ENCODE measurements at regions of chr20 and their contacts with region 1.

Region 1: DNA sequence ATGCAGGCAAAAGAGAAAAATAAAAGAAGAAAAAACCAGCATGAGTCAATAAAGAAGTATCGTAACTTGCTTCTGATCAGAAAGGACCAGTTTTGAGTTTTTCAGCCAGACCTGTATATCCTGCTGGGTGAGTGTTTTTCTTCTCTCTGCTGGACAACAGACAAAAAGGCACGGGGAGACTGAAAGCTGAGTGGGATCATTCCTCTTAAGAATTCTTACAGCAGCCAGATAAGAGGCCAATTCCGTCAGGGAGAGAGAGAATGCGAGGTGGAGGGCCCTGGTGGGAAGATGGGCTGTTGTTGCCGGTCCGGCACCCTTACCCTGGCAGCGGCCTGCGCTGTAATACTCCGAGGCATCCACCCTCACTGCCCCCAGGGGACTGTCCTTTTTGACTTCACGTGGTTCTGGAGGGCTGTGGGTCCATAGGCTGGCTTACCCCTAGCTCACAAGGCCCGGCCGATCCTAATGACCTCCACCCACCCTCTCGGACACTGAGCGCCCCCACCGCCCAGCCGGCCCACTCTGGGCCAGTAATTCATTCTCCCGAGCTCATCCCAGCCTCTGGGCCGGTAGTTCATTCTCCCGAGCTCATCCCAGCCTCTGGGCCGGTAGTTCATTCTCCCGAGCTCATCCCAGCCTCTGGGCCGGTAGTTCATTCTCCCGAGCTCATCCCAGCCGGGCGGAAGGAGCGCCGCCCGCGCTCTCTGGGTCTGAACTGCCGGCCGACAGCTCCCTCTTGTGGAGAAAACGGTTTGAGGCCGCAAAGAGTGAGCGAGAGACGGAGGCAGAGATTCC is 118.3 kb upstream of the SIRPA start:
- DNase-seq: peak; percentile 83
- H3K4me3 ChIP-seq: peak overlapping the region; percentile 83
- H3K27ac ChIP-seq: peak overlapping the region; percentile 68
- H3K27me3 ChIP-seq: peaks cover 4% of the 10 kb centered on the region
- CTCF ChIP-seq: peak; percentile 83

Region 2: DNA sequence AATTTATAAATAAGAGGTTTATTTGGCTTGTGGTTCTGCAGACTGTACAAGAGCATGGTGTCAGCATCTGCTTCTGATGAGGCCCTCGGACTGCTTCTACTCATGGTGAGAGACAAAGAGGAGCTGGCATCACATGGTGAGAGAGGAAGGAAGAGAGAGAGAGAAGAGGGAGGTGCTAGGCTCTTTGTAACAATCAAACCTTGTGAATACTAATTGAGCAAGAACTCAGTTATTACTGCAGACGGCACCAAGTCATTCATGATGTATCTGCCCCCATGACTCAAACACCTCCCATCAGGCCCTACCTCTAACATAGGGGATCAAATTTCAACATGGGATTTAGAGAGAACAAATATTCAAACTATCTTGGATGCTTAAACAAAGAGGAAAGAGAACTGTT is 113.0 kb before region 1 on chr20:
- CTCF ChIA-PET with region 1: no interaction called
- POLR2A ChIA-PET with region 1: no interaction called
- DNase-seq: no peak
- H3K4me3 ChIP-seq: no peak overlapping the region
- H3K27ac ChIP-seq: no peak overlapping the region
- H3K27me3 ChIP-seq: peaks cover 3% of the 10 kb centered on the region
- CTCF ChIP-seq: no peak

Region 3: DNA sequence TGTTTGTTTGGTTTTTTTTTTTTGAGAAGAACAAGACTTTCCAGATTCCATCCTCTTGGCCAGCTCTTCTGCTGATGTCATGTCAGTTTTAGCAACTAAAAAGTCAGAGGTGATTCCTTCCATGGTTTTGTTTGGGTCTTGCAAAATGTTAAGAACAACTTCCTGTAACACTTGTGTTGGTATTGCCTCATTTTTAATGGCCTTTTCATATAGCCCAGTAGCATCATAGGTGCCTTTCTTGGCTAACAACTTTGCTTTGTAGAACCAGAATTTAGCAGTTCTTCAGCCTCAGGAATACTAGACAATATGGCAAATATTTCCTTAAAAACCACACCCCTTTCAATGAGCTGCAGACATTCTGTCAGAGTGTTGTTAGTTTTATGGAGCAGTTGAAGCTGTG is 19.8 kb before region 1 on chr20:
- CTCF ChIA-PET with region 1: interaction called, 126 read pairs
- POLR2A ChIA-PET with region 1: no interaction called
- DNase-seq: no peak
- H3K4me3 ChIP-seq: no peak overlapping the region
- H3K27ac ChIP-seq: no peak overlapping the region
- H3K27me3 ChIP-seq: peaks cover 2% of the 10 kb centered on the region
- CTCF ChIP-seq: no peak

Region 4: GRCh38 chr20:1790386-1790785 is 13.5 kb after region 1 on chr20:
- CTCF ChIA-PET with region 1: interaction called, 46 read pairs
- POLR2A ChIA-PET with region 1: no interaction called
- DNase-seq: no peak
- H3K4me3 ChIP-seq: no peak overlapping the region
- H3K27ac ChIP-seq: no peak overlapping the region
- H3K27me3 ChIP-seq: peaks cover 43% of the 10 kb centered on the region
- CTCF ChIP-seq: no peak

Region 5: GRCh38 chr20:1810926-1811620 is 34.2 kb after region 1 on chr20:
- CTCF ChIA-PET with region 1: interaction called, 116 read pairs
- POLR2A ChIA-PET with region 1: interaction called, 4 read pairs
- DNase-seq: no peak
- H3K4me3 ChIP-seq: no peak overlapping the region
- H3K27ac ChIP-seq: peak overlapping the region; percentile 80
- H3K27me3 ChIP-seq: no peaks in the 10 kb centered on the region
- CTCF ChIP-seq: no peak

Region 6: DNA sequence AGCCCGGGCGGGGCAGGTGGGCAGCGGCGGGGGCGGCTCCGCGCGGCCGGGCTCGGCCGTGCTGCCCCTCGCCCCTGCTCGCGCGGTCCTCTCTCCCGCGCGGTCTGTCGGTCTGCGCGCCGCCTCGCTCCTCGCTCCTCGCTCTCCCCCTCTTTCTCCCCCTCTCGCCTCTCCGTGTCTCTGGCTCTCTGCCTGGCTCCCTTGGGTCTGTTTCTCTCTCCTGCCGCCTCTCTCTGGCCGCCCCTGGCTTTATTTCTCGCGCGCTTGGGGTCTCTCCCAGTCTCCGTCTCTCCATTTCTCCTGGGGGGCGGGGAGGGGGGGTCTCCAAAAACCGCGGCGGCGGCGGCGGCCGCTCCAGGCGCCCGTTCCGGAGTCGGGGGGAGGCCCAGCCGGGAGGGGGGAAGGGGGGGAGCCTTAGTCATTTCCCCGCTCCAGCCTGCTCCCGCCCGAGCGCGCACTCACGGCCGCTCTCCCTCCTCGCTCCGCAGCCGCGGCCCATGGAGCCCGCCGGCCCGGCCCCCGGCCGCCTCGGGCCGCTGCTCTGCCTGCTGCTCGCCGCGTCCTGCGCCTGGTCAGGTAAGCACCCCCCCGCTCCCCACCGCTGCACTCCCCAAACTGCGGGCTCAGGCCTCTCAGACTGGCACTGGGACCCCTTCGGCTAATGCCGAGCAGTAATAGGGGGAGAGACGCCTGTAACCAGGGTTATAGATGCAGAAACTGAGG is 118.2 kb after region 1 on chr20 and contains the start of gene SIRPA:
- CTCF ChIA-PET with region 1: interaction called, 13 read pairs
- POLR2A ChIA-PET with region 1: no interaction called
- DNase-seq: no peak
- H3K4me3 ChIP-seq: peak within 1 kb of the TSS; percentile 86
- H3K27ac ChIP-seq: peak within 1 kb of the TSS; percentile 75
- H3K27me3 ChIP-seq: no peaks in the 10 kb centered on the region
- CTCF ChIP-seq: no peak
- polyA plus RNA-seq, gene SIRPA: 21.2 and 27.7 TPM in 2 replicates

Region 7: DNA sequence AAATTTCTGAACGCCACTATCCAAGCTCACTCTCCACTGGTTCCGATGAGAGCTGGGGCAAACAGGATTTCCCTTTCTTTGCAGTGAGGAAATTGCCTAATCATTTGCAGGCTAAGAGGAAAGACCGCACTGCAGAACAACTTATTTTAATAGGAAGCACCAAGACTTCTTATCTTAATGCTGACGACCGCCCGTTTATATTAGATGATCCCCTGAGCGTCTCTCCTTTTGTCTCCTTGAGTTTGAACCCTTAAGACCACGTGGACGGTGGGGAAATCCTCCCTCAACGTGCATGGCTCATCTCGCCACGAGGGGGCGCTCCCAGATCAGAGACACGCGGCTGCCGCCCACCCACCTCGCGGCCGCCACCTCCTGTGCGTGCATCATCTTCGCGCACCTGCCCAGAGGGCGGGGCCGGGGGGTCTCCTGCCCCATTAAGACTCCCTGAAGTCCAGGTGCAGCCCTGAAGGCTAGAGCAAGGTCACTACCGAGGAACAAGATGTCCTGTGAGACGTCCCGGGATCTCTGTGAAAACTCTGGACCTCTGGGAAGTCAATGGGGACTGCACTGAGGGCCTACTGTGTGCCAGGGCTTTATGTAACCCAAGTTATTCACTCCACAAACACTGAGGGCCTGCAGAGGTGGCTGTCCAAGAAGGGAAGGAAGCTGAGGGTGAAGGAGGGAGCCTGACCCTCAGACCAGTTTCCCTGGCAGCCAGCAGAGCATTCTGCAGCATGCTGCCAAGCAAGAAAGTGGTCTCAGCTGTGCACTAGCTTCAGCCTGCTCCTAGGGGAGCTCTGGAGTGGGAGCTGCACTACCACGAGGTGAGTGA is 188.9 kb after region 1 on chr20:
- CTCF ChIA-PET with region 1: interaction called, 15 read pairs
- POLR2A ChIA-PET with region 1: no interaction called
- DNase-seq: peak; percentile 16
- H3K4me3 ChIP-seq: no peak overlapping the region
- H3K27ac ChIP-seq: no peak overlapping the region
- H3K27me3 ChIP-seq: peaks cover 38% of the 10 kb centered on the region
- CTCF ChIP-seq: peak; percentile 85

Region 8: DNA sequence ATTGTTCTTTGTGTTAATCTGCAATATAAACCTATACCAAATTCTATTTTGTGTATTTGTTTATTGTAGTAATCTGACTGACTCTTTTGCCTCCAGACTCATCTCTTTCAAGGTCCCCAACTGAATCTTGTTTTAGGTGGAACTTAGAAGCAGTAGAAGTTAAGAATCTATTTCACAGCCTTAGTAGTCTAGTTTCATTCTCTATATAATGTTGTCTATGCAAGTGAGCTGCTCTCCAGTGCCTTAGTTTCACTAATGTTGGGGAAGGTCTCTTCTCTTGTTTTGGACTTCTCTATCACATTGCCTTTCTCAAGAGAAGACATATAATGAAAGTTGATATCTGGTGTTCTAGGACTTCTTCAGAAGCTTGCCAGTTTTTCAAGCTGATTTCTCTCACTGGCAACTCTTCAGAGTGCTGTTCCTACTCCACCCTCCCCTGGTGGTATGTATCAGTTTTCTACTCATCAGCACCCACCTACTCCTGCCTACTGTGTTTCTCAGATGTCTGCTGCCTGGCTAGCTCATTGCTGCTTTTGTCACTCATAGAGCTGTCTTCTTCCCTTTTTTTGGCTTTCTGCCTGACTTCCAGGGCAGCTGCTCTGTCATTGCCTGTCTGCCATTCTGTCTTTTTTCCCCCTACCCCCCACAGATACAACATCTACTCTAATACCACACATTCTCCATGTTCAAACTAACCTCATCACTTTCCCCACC is 1178.5 kb after region 1 on chr20:
- CTCF ChIA-PET with region 1: no interaction called
- POLR2A ChIA-PET with region 1: no interaction called
- DNase-seq: no peak
- H3K4me3 ChIP-seq: no peak overlapping the region
- H3K27ac ChIP-seq: no peak overlapping the region
- H3K27me3 ChIP-seq: no peaks in the 10 kb centered on the region
- CTCF ChIP-seq: no peak